Activated CD8-positive, alpha-beta T cell treated with anti-CD3 and anti-CD28 coated beads for 36 hours (primary cell): ENCODE measurements at regions of chr11 and their contacts with region 1.

Region 1: DNA sequence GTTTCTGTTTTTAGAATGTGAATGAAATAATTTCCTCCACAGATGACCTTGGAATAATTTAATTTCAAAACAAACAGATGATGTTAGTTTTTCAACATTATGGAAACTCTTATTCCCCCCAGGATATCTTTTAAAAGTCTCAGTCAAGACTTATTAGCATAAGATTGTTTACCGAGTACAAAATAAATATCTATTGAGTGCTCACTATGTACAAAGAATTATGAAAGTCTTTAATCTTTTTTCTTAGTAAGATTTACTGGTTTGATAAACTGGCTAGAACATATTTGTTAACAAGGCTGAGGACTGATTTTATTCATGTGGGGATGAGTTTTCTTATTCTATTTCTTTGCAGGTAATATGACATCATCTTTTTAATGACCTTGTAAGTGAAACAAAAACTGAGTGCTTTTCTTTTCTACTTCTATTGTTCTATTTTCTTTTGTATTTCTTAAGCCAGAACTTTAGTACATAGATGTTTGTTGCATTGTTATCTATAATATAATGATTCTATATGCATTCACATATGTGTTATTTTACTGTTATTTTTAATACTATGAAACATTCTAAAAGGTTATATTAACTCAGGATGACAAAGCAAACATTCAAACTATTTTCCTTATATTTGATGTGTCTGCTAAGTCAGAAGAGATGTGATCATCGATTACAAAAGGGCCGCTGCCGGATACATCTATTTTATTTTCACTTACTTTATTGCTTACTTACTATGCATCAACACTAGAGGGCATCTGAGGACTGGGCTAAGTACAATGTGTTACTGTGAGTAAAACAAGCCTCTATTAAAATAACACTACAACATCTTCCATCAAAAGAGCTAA is 111.0 kb upstream of the ARHGAP42 start:
- DNase-seq: peak; percentile 15
- ATAC-seq: no peak
- H3K4me3 Mint-ChIP-seq: no peak overlapping the region
- H3K27ac Mint-ChIP-seq: no peak overlapping the region
- H3K4me1 Mint-ChIP-seq: no peaks in the 10 kb centered on the region
- H3K27me3 Mint-ChIP-seq: peaks cover 1% of the 10 kb centered on the region
- CTCF ChIP-seq: peak; percentile 64

Region 2: GRCh38 chr11:100855466-100856067 is 279.5 kb after region 1 on chr11:
- CTCF ChIA-PET with region 1: interaction called, 9 read pairs
- POLR2A ChIA-PET with region 1: no interaction called
- intact Hi-C with region 1: loop called (anchors 10 kb)
- DNase-seq: no peak
- ATAC-seq: no peak
- H3K4me3 Mint-ChIP-seq: no peak overlapping the region
- H3K27ac Mint-ChIP-seq: no peak overlapping the region
- H3K4me1 Mint-ChIP-seq: no peaks in the 10 kb centered on the region
- H3K27me3 Mint-ChIP-seq: no peaks in the 10 kb centered on the region
- CTCF ChIP-seq: peak; percentile 46

Region 3: DNA sequence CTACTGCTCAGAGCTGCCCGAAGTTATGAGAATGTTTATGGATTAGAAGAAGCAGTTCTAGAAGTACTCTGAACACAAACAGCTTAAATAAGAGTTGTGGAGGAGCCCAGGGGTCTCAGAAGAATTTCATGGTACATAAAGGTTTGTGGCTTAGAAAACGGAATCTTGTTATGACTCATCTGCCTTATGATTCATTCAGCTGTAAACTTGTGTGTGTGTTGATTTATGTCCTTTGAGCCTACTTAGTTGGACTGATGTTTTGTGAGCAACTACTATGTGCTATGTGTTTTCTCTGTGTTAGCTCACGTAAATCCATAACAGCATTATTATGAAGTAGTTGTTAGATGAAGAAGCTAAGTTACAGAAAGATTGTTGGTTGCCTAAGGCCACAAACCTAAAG is 349.8 kb after region 1 on chr11:
- CTCF ChIA-PET with region 1: interaction called, 5 read pairs
- POLR2A ChIA-PET with region 1: no interaction called
- intact Hi-C with region 1: loop called (anchors 10 kb)
- DNase-seq: no peak
- ATAC-seq: peak; percentile 24
- H3K4me3 Mint-ChIP-seq: no peak overlapping the region
- H3K27ac Mint-ChIP-seq: no peak overlapping the region
- H3K4me1 Mint-ChIP-seq: peaks cover 2% of the 10 kb centered on the region
- H3K27me3 Mint-ChIP-seq: no peaks in the 10 kb centered on the region
- CTCF ChIP-seq: no peak